Activated naive CD8-positive, alpha-beta T cell treated with anti-CD3 and anti-CD28 coated beads, Interleukin-2, amount 10 ng/mL, durations not matched to agents 7 days and 5 days (primary cell): ENCODE measurements at regions of chr5 and their contacts with region 1.

Region 1: GRCh38 chr5:176543428-176544173 is 5.5 kb upstream of the CDHR2 start:
- DNase-seq: peak; percentile 89
- ATAC-seq: peak; percentile 78
- H3K4me3 Mint-ChIP-seq: peak overlapping the region; percentile 94
- H3K27ac Mint-ChIP-seq: peak overlapping the region; percentile 96
- H3K4me1 Mint-ChIP-seq: peaks cover 48% of the 10 kb centered on the region
- H3K27me3 Mint-ChIP-seq: no peaks in the 10 kb centered on the region

Region 2: DNA sequence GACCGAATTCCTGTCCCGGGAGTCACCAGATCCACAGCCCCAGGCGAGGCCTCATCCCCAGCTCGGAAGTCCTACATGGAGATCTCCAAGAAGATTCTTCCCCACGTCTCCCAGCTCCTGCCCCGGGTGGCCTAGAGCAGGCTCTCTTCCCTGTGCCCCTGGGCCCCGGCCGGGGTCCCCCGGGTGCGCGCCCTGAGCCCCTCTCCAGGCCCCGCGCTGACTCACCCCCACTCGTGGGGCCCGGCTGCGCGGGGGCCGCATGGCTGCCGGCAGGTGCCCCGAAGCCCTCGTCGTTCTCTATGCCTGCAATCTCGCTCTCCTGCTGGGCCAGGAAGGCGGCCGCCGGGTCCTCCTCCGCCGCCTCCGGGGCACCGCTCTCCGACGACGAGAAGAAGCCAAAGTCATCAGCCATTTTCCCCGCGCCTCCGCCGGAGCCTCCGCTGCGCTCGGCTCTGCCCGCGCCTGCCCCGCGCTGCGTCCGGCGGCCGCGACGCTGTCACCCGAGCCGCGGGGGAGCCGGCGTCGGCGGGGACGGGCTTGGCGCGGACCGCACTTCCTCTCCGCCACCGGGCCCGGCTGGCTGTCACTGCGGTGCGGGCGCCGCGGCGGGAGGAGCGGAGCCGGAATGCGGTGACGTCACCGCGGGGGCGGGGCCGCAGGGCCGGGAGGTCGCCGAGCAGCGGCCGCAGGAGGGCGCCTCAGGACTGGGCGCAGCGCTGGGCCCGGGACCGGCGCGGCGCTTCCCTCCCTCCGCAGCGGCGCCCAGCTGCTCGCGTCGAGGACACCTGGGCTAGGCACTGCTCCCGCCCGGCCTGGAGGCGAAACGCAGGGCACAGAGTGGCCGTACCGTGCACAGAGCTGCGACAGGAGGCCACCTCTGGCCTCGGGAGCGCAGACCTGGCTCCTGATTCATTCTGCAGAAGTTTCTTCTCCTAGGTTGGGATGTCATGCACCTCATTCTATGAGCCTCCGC is 127.4 kb before region 1 on chr5 and contains the start of gene CLTB:
- POLR2A ChIA-PET with region 1: interaction called, 20 read pairs
- DNase-seq: peak; percentile 89
- ATAC-seq: peak; percentile 96
- H3K4me3 Mint-ChIP-seq: peak within 1 kb of the TSS; percentile 84
- H3K27ac Mint-ChIP-seq: peak within 1 kb of the TSS; percentile 77
- H3K4me1 Mint-ChIP-seq: peaks cover 24% of the 10 kb centered on the region
- H3K27me3 Mint-ChIP-seq: peaks cover 17% of the 10 kb centered on the region
- total RNA-seq, gene CLTB: 52.8 to 53.1 TPM

Region 3: GRCh38 chr5:176447982-176448608 is 95.5 kb before region 1 on chr5 and contains the start of gene FAF2:
- POLR2A ChIA-PET with region 1: interaction called, 26 read pairs
- DNase-seq: peak; percentile 100
- ATAC-seq: peak; percentile 98
- H3K4me3 Mint-ChIP-seq: peak within 1 kb of the TSS; percentile 98
- H3K27ac Mint-ChIP-seq: peak within 1 kb of the TSS; percentile 97
- H3K4me1 Mint-ChIP-seq: peaks cover 24% of the 10 kb centered on the region
- H3K27me3 Mint-ChIP-seq: peaks cover 3% of the 10 kb centered on the region
- total RNA-seq, gene FAF2: 32.4 TPM

Region 4: GRCh38 chr5:176573564-176574296 is 30.1 kb after region 1 on chr5:
- POLR2A ChIA-PET with region 1: interaction called, 10 read pairs
- DNase-seq: peak; percentile 86
- ATAC-seq: peak; percentile 86
- H3K4me3 Mint-ChIP-seq: no peak overlapping the region
- H3K27ac Mint-ChIP-seq: no peak overlapping the region
- H3K4me1 Mint-ChIP-seq: peaks cover 5% of the 10 kb centered on the region
- H3K27me3 Mint-ChIP-seq: peaks cover 8% of the 10 kb centered on the region